ENCODE measurements at regions of chr20 and their contacts with region 1.

Region 1: GRCh38 chr20:49982346-49983122 is at the start of gene SNAI1:
- DNase-seq: peak; percentile 75
- H3K4me3 Mint-ChIP-seq: peak within 1 kb of the TSS; percentile 48
- H3K27ac Mint-ChIP-seq: no peak within 1 kb of the TSS
- H3K4me1 Mint-ChIP-seq: peaks cover 20% of the 10 kb centered on the region
- H3K27me3 Mint-ChIP-seq: peaks cover 3% of the 10 kb centered on the region
- total RNA-seq, gene SNAI1: 0.31 TPM in 1 of 2 experiments, not detected in the other

Region 2: GRCh38 chr20:49567421-49568334 is 414.9 kb before region 1 on chr20 and contains the start of gene PTGIS:
- CTCF ChIA-PET with region 1: no interaction called
- intact Hi-C with region 1: no loop called
- DNase-seq: no peak
- H3K4me3 Mint-ChIP-seq: no peak within 1 kb of the TSS
- H3K27ac Mint-ChIP-seq: no peak within 1 kb of the TSS
- H3K4me1 Mint-ChIP-seq: peaks cover 3% of the 10 kb centered on the region
- H3K27me3 Mint-ChIP-seq: peaks cover 42% of the 10 kb centered on the region
- total RNA-seq, gene PTGIS: not detected

Region 3: DNA sequence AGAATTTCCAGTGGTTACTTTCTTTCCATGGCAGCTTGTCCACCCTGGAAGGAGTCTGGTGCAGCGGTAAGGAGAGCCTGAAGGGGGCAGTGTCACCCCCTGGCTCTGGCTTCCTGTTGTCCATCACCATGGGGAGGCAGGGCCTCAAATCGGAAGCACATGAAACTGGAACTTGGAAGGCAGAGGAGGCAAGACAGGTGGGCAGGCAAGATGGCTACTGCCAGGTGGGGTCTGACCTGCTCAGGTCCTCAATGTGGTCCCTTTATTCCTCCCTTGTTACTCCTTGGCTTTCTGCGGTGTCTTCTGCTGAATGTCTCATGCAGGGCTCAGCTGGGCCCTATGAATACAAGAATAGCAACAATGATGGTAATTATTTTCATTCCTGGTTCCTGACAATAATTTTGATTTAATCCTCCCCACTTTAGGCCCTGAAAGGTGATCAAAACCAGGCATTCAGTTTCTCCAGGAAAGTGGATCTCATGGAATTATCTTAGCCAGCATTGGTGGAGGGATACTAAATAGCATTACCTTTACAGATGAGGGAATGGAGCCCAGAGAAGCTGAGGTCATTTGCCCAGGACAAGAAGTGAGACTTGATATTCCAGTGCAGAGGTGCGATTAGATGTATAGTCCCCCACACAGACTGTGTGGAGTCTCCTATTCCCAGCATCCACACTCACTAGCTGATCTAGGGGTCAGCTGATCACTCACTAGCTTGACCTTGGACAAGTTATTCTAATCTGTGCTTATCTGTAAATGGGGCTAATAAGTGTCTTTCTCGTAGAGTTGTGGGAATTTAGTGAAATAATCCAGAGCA is 17.4 kb before region 1 on chr20:
- CTCF ChIA-PET with region 1: interaction called, 20 read pairs
- intact Hi-C with region 1: no loop called
- DNase-seq: peak; percentile 53
- H3K4me3 Mint-ChIP-seq: no peak overlapping the region
- H3K27ac Mint-ChIP-seq: no peak overlapping the region
- H3K4me1 Mint-ChIP-seq: peaks cover 1% of the 10 kb centered on the region
- H3K27me3 Mint-ChIP-seq: no peaks in the 10 kb centered on the region

Region 4: DNA sequence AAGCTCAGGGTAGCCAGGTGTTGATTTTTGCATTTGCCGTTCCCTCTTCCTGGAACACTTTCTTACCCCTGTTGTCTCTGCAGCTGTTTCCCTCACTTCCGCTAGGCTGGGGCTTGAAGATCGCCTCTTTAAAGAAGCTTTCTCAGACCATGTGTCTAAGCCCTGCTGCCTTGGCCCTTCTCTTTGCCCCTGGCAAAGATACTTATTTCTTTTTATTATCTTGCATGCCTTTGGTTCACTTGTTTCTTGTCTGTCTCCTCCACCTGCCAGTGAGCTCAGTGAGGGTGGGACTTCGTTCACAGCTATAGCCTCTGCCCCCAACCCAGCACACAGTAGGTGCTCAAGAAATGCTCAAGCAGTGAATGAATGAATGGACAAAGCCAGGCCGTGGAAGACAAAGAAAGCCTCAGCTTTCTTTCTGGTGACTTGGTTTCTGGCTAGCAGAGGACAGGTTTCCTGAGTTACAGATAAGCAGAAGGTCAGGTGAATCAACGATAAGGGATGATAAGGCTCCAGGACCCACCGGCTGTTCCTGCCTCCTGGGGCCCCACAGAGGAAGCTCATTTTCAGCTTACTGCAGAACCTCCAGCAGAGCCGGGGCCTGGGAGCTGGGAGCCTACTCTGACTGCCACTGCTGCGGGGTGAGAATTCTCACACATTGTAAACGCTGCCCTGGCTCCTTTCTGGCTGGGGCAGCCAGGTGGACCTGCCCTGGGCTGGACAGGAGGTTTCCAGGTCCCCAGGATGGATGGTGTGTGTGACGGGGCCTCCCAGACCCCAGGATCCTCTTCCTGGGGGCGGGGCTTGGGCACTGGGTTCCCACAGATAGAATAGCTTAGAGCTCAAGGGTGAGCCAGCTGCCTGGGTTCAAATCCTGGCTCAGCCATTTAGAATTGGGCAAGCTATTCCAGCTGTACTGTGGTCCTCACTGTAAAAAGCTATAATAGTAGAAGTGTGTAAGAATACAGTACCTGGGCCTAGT is 30.0 kb after region 1 on chr20:
- CTCF ChIA-PET with region 1: interaction called, 10 read pairs
- intact Hi-C with region 1: no loop called
- DNase-seq: no peak
- H3K4me3 Mint-ChIP-seq: no peak overlapping the region
- H3K27ac Mint-ChIP-seq: no peak overlapping the region
- H3K4me1 Mint-ChIP-seq: peaks cover 8% of the 10 kb centered on the region
- H3K27me3 Mint-ChIP-seq: peaks cover 8% of the 10 kb centered on the region

Region 5: GRCh38 chr20:50085452-50086365 is 103.2 kb after region 1 on chr20:
- CTCF ChIA-PET with region 1: interaction called, 28 read pairs
- intact Hi-C with region 1: loop called (anchors 5 kb)
- DNase-seq: peak; percentile 58
- H3K4me3 Mint-ChIP-seq: peak overlapping the region; percentile 5
- H3K27ac Mint-ChIP-seq: peak overlapping the region; percentile 11
- H3K4me1 Mint-ChIP-seq: peaks cover 28% of the 10 kb centered on the region
- H3K27me3 Mint-ChIP-seq: no peaks in the 10 kb centered on the region

Region 6: GRCh38 chr20:50138479-50139393 is 156.2 kb after region 1 on chr20:
- CTCF ChIA-PET with region 1: no interaction called
- intact Hi-C with region 1: no loop called
- DNase-seq: no peak
- H3K4me3 Mint-ChIP-seq: no peak overlapping the region
- H3K27ac Mint-ChIP-seq: peak overlapping the region; percentile 21
- H3K4me1 Mint-ChIP-seq: peaks cover 36% of the 10 kb centered on the region
- H3K27me3 Mint-ChIP-seq: no peaks in the 10 kb centered on the region

Region 7: DNA sequence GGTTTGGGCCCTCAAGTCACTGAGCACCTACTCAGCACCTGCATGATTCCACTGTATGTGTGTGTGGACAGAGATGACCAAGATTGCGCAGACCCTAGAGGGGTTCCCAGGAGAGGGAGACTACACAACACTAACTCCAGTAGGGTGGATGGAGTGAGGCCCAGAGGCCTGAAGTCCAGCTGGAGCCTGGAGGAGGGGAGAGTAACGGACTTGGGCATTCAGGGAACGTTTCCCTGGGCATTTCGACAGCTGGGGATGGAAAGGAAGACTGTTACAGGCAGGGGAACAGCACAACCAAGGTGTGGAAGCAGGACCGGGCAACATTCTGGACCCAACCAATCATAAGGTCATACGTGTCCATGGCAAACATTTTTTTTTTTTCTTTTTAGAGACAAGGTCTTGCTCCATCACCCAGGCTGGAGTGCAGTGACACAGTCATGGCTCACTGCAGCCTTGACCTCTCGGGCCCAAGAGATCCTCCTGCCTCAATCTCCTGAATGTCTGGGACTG is 197.0 kb after region 1 on chr20:
- CTCF ChIA-PET with region 1: interaction called, 15 read pairs
- intact Hi-C with region 1: loop called (anchors 1 kb)
- DNase-seq: no peak
- H3K4me3 Mint-ChIP-seq: no peak overlapping the region
- H3K27ac Mint-ChIP-seq: no peak overlapping the region
- H3K4me1 Mint-ChIP-seq: no peaks in the 10 kb centered on the region
- H3K27me3 Mint-ChIP-seq: peaks cover 9% of the 10 kb centered on the region

Region 8: DNA sequence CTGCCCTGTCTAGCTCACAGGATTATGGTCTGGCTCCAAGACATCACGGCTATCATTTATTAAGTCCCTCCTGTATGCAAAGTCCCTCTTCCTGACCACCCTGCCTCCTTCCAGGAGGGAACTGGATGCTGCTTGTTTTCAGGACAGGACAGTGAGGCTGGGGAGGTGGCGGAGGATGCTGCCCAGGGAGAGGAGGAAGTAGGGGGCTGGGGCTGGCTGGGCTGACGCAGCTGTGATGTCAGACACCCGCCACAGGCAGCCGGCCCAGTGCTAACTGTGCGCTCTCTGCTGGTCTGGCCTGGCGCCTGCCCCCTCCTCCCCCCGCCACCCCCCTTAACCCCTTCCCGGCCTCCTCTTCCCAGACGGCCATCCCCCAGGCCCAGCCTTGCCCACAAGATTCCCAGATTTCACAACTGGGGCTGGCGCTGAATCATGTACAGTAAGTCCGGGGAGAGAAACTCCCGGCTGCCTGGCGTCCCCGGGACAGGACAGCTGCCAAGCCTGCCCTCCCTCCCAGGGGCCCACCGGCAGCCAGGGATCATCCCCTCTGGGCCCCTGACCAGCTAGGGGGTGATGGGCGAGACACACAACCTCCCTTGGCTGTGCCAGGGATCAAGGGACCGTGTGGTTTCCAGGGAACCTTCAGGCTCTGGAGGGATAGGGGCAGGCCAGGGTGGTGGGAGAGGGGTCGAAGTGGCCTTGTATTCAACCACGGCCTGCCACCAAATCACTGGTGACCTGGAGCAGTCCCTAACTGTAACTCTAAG is 326.2 kb after region 1 on chr20:
- CTCF ChIA-PET with region 1: no interaction called
- intact Hi-C with region 1: no loop called
- DNase-seq: no peak
- H3K4me3 Mint-ChIP-seq: no peak overlapping the region
- H3K27ac Mint-ChIP-seq: no peak overlapping the region
- H3K4me1 Mint-ChIP-seq: no peaks in the 10 kb centered on the region
- H3K27me3 Mint-ChIP-seq: no peaks in the 10 kb centered on the region